CD4-positive, alpha-beta T cell (primary cell): ENCODE measurements at regions of chr16 and their contacts with region 1.

Region 1: DNA sequence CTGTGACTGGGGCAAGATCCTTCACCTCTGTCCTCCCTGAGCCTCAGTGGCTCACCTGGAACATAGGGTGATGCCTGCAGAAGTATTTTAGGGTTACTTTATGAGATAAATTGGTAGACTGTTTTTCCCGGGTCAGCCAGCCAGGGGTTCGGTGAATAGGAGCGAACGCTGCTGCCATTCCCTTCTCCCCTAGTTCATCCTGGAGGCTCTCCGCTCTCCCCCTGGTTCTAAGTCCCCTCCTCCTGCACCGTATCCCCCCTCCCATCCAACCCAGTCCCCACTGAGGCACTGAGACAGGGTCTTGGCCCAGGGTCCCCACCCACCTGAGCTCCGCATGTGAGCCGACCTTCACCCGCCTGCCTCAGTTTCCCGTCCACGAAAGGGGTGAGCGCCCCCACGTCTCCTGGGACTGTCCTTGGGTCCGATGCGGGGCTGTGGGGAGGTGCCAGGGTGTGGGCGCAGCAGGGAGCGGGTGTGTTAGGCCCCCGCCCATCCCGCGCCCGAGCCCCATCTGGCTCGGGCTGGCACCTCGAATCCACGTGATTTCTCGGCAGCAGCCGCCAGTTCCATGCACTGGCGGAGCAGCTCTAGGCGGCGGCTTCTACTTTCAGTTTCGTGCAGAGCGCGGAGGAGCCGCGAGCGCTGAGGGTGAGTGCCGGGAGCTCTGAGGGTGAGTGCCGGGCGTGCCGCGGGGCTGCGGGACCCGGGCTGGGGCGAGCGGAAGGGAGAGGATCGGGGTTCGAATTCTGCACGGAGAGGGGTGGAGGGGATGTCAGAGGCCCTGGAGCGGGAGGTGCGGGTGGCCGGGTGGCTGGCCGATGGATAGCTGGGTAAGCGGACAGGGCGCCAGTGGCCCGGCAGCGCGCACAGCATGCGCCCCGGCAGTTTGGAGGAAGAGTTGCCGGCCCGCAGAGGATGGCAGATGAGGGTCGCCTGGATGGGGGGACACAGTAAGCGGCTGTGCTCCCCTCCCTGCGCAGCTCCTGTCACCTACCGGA is at the start of gene NLRC5:
- DNase-seq: peak; percentile 82 to 95 (median 89)
- ATAC-seq: peak; percentile 90
- H3K4me3 ChIP-seq: peak within 1 kb of the TSS; percentile 90
- H3K4me3 Mint-ChIP-seq: peak within 1 kb of the TSS; percentile 99
- H3K27ac ChIP-seq: peak within 1 kb of the TSS; percentile 85 to 93
- H3K27ac Mint-ChIP-seq: peak within 1 kb of the TSS; percentile 96
- H3K4me1 ChIP-seq: peaks cover 81% of the 10 kb centered on the region
- H3K4me1 Mint-ChIP-seq: peaks cover 92% of the 10 kb centered on the region
- H3K27me3 ChIP-seq: no peaks in the 10 kb centered on the region
- H3K27me3 Mint-ChIP-seq: no peaks in the 10 kb centered on the region
- CTCF ChIP-seq: no peak
- total RNA-seq, gene NLRC5: 424 to 434 TPM

Region 2: GRCh38 chr16:56964243-56965148 is 24.8 kb before region 1 on chr16:
- CTCF ChIA-PET with region 1: interaction called, 8 read pairs
- POLR2A ChIA-PET with region 1: interaction called, 14 read pairs
- intact Hi-C with region 1: loop called in 1 of 2 experiments (anchors 2 kb)
- DNase-seq: peak; percentile 90 to 99 (median 96)
- ATAC-seq: peak; percentile 98
- H3K4me3 ChIP-seq: no peak overlapping the region
- H3K4me3 Mint-ChIP-seq: no peak overlapping the region
- H3K27ac ChIP-seq: no peak overlapping the region
- H3K27ac Mint-ChIP-seq: no peak overlapping the region
- H3K4me1 ChIP-seq: peaks cover 20% of the 10 kb centered on the region
- H3K4me1 Mint-ChIP-seq: peaks cover 19% of the 10 kb centered on the region
- H3K27me3 ChIP-seq: no peaks in the 10 kb centered on the region
- H3K27me3 Mint-ChIP-seq: no peaks in the 10 kb centered on the region
- CTCF ChIP-seq: peak; percentile 99

Region 3: GRCh38 chr16:57013229-57013628 is 24.0 kb after region 1 on chr16:
- CTCF ChIA-PET with region 1: interaction called, 8 read pairs
- POLR2A ChIA-PET with region 1: interaction called, 68 read pairs
- intact Hi-C with region 1: loop called in 1 of 2 experiments (anchors 1 kb)
- DNase-seq: peak in 2 of 14 experiments; percentile 9 to 34
- ATAC-seq: no peak
- H3K4me3 ChIP-seq: no peak overlapping the region
- H3K4me3 Mint-ChIP-seq: peak overlapping the region; percentile 71
- H3K27ac ChIP-seq: peak overlapping the region; percentile 43 to 86
- H3K27ac Mint-ChIP-seq: peak overlapping the region; percentile 91
- H3K4me1 ChIP-seq: peaks cover 78% of the 10 kb centered on the region
- H3K4me1 Mint-ChIP-seq: peaks cover 78% of the 10 kb centered on the region
- H3K27me3 ChIP-seq: no peaks in the 10 kb centered on the region
- H3K27me3 Mint-ChIP-seq: no peaks in the 10 kb centered on the region
- CTCF ChIP-seq: no peak

Region 4: GRCh38 chr16:57029161-57030160 is 40.2 kb after region 1 on chr16:
- CTCF ChIA-PET with region 1: interaction called, 3 read pairs
- POLR2A ChIA-PET with region 1: interaction called, 55 read pairs
- intact Hi-C with region 1: loop called in 1 of 2 experiments (anchors 5 kb)
- DNase-seq: peak in 2 of 14 experiments; percentile 40 to 44
- ATAC-seq: no peak
- H3K4me3 ChIP-seq: no peak overlapping the region
- H3K4me3 Mint-ChIP-seq: no peak overlapping the region
- H3K27ac ChIP-seq: no peak overlapping the region
- H3K27ac Mint-ChIP-seq: peak overlapping the region; percentile 84
- H3K4me1 ChIP-seq: peaks cover 81% of the 10 kb centered on the region
- H3K4me1 Mint-ChIP-seq: peaks cover 77% of the 10 kb centered on the region
- H3K27me3 ChIP-seq: no peaks in the 10 kb centered on the region
- H3K27me3 Mint-ChIP-seq: no peaks in the 10 kb centered on the region
- CTCF ChIP-seq: no peak

Region 5: GRCh38 chr16:57045694-57046381 is 56.6 kb after region 1 on chr16:
- CTCF ChIA-PET with region 1: interaction called, 11 read pairs
- POLR2A ChIA-PET with region 1: interaction called, 81 read pairs
- intact Hi-C with region 1: loop called (anchors 1 to 2 kb)
- DNase-seq: peak in 10 of 14 experiments; percentile 22 to 60 (median 38)
- ATAC-seq: no peak
- H3K4me3 ChIP-seq: no peak overlapping the region
- H3K4me3 Mint-ChIP-seq: no peak overlapping the region
- H3K27ac ChIP-seq: peak overlapping the region; percentile 32 to 44
- H3K27ac Mint-ChIP-seq: peak overlapping the region; percentile 85
- H3K4me1 ChIP-seq: peaks cover 60% of the 10 kb centered on the region
- H3K4me1 Mint-ChIP-seq: peaks cover 50% of the 10 kb centered on the region
- H3K27me3 ChIP-seq: no peaks in the 10 kb centered on the region
- H3K27me3 Mint-ChIP-seq: no peaks in the 10 kb centered on the region
- CTCF ChIP-seq: peak; percentile 42

Region 6: GRCh38 chr16:57178793-57179212 is 189.6 kb after region 1 on chr16:
- CTCF ChIA-PET with region 1: no interaction called
- POLR2A ChIA-PET with region 1: no interaction called
- intact Hi-C with region 1: no loop called
- DNase-seq: no peak
- ATAC-seq: no peak
- H3K4me3 ChIP-seq: no peak overlapping the region
- H3K4me3 Mint-ChIP-seq: no peak overlapping the region
- H3K27ac ChIP-seq: no peak overlapping the region
- H3K27ac Mint-ChIP-seq: no peak overlapping the region
- H3K4me1 ChIP-seq: no peaks in the 10 kb centered on the region
- H3K4me1 Mint-ChIP-seq: peaks cover 19% of the 10 kb centered on the region
- H3K27me3 ChIP-seq: no peaks in the 10 kb centered on the region
- H3K27me3 Mint-ChIP-seq: no peaks in the 10 kb centered on the region
- CTCF ChIP-seq: no peak